ENCODE measurements at regions of chr11 and their contacts with region 1.

Region 1: GRCh38 chr11:63768237-63769043 is at the start of gene ZFTA:
- DNase-seq: peak; percentile 37
- ATAC-seq: peak; percentile 53
- H3K4me3 ChIP-seq: peak within 1 kb of the TSS; percentile 59
- H3K27ac ChIP-seq: peak within 1 kb of the TSS; percentile 58
- H3K4me1 ChIP-seq: peaks cover 15% of the 10 kb centered on the region
- H3K27me3 ChIP-seq: no peaks in the 10 kb centered on the region
- CTCF ChIP-seq: peak; percentile 84
- POLR2A ChIP-seq: no peak
- RAD21 ChIP-seq: peak; percentile 72
- total RNA-seq, gene ZFTA: 5.4 and 7.2 TPM in 2 replicates

Region 2: DNA sequence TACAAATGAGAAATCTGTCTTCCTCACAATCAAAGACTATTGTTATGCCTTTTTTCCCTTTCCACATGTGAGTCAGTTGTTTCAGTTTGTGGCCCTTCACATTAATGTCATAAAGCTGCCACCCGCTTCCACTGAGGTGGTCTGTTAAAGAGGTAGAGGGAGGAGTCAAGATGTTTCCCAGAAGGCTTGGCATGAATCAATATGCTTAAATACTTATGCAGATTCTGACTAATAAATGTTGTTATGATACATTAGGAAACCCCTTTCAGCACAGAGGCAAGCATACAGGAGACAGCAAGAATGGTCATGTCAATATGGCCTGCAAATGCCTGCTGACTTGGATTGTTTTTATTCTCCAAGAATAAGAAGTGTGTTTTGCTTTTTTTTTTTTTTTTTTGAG is 80.6 kb before region 1 on chr11:
- CTCF ChIA-PET with region 1: no interaction called
- POLR2A ChIA-PET with region 1: no interaction called
- dilution Hi-C with region 1: no loop called
- in situ Hi-C with region 1: no loop called
- intact Hi-C with region 1: no loop called
- DNase-seq: no peak
- ATAC-seq: no peak
- H3K4me3 ChIP-seq: no peak overlapping the region
- H3K27ac ChIP-seq: no peak overlapping the region
- H3K4me1 ChIP-seq: peaks cover 6% of the 10 kb centered on the region
- H3K27me3 ChIP-seq: no peaks in the 10 kb centered on the region
- CTCF ChIP-seq: no peak
- POLR2A ChIP-seq: no peak
- RAD21 ChIP-seq: no peak

Region 3: DNA sequence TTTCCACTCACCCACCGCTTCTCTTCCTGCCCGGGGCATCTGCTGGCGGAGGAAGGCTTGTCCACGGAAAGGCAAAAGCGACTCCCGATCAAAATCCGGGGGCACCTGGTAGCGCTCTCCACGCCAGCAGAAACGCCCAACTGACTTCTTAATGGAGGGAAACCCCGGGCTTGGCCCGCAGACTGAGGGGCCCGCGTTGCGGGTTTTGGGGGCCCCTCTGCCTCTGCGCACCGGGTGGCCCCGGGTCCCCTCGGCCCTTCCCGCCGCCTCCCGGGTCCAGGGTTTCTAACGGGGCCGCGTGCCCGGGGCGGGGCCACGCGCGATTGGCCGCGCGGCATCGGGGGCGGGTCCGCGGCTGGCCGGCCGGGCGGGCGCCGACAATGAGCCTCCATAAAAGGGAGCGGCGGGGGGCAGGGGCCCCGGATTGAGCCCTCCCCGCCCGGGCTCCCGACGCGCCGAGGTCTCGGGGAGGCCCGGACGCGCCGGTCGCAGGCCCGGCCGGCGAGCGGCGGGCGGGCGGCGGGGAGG is 44.7 kb after region 1 on chr11 and contains the start of gene SPINDOC:
- CTCF ChIA-PET with region 1: no interaction called
- POLR2A ChIA-PET with region 1: no interaction called
- dilution Hi-C with region 1: no loop called
- in situ Hi-C with region 1: no loop called
- intact Hi-C with region 1: loop called (anchors 2 kb)
- DNase-seq: peak; percentile 47
- ATAC-seq: peak; percentile 96
- H3K4me3 ChIP-seq: peak within 1 kb of the TSS; percentile 98
- H3K27ac ChIP-seq: peak within 1 kb of the TSS; percentile 95
- H3K4me1 ChIP-seq: peaks cover 4% of the 10 kb centered on the region
- H3K27me3 ChIP-seq: no peaks in the 10 kb centered on the region
- CTCF ChIP-seq: no peak
- POLR2A ChIP-seq: peak; percentile 83
- RAD21 ChIP-seq: no peak
- total RNA-seq, gene SPINDOC: 10.0 and 11.9 TPM in 2 replicates

Region 4: GRCh38 chr11:63945477-63946163 is 177.2 kb after region 1 on chr11:
- CTCF ChIA-PET with region 1: interaction called, 4 read pairs
- POLR2A ChIA-PET with region 1: no interaction called
- dilution Hi-C with region 1: no loop called
- in situ Hi-C with region 1: loop called (anchors 10 kb)
- intact Hi-C with region 1: loop called (anchors 2 kb)
- DNase-seq: peak; percentile 68
- ATAC-seq: peak; percentile 97
- H3K4me3 ChIP-seq: no peak overlapping the region
- H3K27ac ChIP-seq: no peak overlapping the region
- H3K4me1 ChIP-seq: peaks cover 6% of the 10 kb centered on the region; the same call in 1 of the 2 replicates
- H3K27me3 ChIP-seq: no peaks in the 10 kb centered on the region
- CTCF ChIP-seq: peak; percentile 77
- POLR2A ChIP-seq: no peak
- RAD21 ChIP-seq: peak; percentile 76